PC-3 (cell line): ENCODE measurements at regions of chr6 and their contacts with region 1.

Region 1: DNA sequence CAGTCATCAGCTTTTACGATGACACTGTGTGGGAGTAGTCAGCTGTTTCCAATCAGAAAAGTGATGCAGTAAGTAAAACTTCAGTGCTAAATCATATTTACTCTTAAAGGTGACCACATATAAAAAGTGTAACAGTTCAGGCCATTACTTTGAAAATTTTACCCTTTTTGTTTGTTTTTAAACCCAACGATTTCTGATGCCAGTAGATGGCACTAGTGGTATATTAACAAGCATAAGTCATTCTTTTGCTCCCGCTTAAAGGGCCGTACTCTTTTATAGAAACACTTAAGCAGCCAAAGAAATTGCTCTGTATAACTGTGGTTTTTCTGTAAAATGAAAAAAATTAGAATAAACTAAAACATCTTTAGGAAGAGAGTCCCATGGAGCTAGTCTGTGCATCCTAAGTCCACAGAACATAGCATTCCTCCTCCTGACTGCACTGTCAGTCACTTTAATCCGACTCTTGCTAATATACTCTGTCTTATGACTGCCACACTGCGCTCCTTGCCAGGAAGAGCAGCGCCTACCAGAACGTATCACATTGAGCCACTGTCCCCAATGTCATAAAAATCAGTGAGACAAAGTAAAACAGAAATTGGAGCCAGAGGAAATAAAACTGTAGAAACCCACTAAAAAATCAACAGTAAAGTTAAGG is 25.0 kb downstream of the HEBP2 start:
- DNase-seq: peak; percentile 59
- ATAC-seq: peak; percentile 73
- H3K4me3 ChIP-seq: no peak overlapping the region
- H3K27ac ChIP-seq: no peak overlapping the region
- H3K4me1 ChIP-seq: no peaks in the 10 kb centered on the region
- H3K27me3 ChIP-seq: no peaks in the 10 kb centered on the region
- CTCF ChIP-seq: peak; percentile 77

Region 2: GRCh38 chr6:138012682-138013081 is 416.4 kb before region 1 on chr6:
- CTCF ChIA-PET with region 1: no interaction called
- POLR2A ChIA-PET with region 1: no interaction called
- intact Hi-C with region 1: no loop called
- DNase-seq: no peak
- ATAC-seq: no peak
- H3K4me3 ChIP-seq: no peak overlapping the region
- H3K27ac ChIP-seq: no peak overlapping the region
- H3K4me1 ChIP-seq: no peaks in the 10 kb centered on the region
- H3K27me3 ChIP-seq: no peaks in the 10 kb centered on the region
- CTCF ChIP-seq: no peak

Region 3: DNA sequence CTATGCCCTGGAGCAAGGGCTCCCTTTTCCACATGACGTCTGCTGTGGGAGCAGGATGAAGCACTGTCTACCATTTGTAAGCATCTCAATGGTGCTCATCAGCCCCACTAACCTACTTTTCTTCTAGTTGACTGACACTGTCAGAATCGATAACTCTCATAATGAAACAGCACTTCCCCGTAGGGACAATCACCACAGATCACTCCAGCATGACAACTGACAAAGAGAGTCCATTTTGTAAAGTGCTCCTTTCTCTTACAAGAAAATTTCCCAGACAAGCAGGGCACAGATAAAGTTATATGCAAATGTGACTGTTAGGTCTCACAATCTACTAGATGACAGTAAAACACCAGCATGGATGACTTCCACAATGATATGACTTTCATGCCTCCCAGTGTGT is 21.4 kb after region 1 on chr6:
- CTCF ChIA-PET with region 1: no interaction called
- POLR2A ChIA-PET with region 1: interaction called, 12 read pairs
- intact Hi-C with region 1: no loop called
- DNase-seq: no peak
- ATAC-seq: no peak
- H3K4me3 ChIP-seq: no peak overlapping the region
- H3K27ac ChIP-seq: no peak overlapping the region
- H3K4me1 ChIP-seq: peaks cover 10% of the 10 kb centered on the region
- H3K27me3 ChIP-seq: no peaks in the 10 kb centered on the region
- CTCF ChIP-seq: no peak

Region 4: GRCh38 chr6:138465007-138465645 is 36.1 kb after region 1 on chr6:
- CTCF ChIA-PET with region 1: no interaction called
- POLR2A ChIA-PET with region 1: no interaction called
- intact Hi-C with region 1: loop called (anchors 5 kb)
- DNase-seq: peak; percentile 88
- ATAC-seq: peak; percentile 70
- H3K4me3 ChIP-seq: peak overlapping the region; percentile 28; the same call in 1 of the 2 replicates
- H3K27ac ChIP-seq: peak overlapping the region; percentile 95
- H3K4me1 ChIP-seq: peaks cover 54% of the 10 kb centered on the region
- H3K27me3 ChIP-seq: no peaks in the 10 kb centered on the region
- CTCF ChIP-seq: no peak

Region 5: DNA sequence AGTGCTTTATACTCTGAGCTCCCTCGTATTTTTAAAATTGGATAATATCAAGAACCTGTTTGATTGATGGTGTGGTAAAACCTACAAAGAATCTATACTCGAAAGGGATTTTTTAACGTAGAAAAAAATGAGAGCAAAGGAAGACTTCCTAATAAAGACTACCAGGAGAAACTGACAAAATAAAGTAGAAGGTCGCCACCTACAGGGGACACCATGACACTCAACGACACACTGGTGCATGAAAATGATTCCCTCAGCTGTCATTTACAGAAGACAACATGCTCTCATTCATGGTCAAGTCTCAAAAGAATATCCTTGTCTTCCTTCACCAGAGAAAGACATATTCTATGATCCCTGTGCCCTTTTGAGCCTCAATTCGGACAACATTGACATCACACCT is 80.3 kb after region 1 on chr6:
- CTCF ChIA-PET with region 1: no interaction called
- POLR2A ChIA-PET with region 1: no interaction called
- intact Hi-C with region 1: loop called (anchors 1 kb)
- DNase-seq: peak; percentile 59
- ATAC-seq: peak; percentile 58; the same call in 1 of the 2 replicates
- H3K4me3 ChIP-seq: no peak overlapping the region
- H3K27ac ChIP-seq: no peak overlapping the region
- H3K4me1 ChIP-seq: 0 out of 2 replicates have a peak, but pooled peaks cover 6% of the 10 kb centered on the region
- H3K27me3 ChIP-seq: no peaks in the 10 kb centered on the region
- CTCF ChIP-seq: peak; percentile 76

Region 6: DNA sequence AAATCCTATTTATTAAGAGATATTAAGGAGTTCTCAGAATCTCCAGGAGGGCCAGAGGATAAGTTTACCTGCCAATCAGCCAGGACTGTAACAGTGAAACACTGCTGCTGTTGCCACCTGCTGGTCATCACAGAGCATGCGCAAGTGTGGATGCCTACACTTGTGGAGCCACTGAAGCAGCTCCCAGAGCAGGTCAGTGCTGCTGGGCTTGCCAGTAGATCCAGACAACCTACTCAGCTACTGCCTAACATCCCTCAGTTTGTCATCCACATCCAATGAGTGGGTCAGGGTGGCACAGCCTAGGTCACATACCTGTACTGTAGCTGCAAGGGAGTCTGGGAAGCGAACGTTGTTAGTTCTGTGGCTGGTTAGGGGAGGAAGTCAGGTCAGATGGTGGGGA is 88.6 kb after region 1 on chr6:
- CTCF ChIA-PET with region 1: interaction called, 4 read pairs
- POLR2A ChIA-PET with region 1: no interaction called
- intact Hi-C with region 1: loop called (anchors 1 kb)
- DNase-seq: peak; percentile 68
- ATAC-seq: peak; percentile 97
- H3K4me3 ChIP-seq: no peak overlapping the region
- H3K27ac ChIP-seq: no peak overlapping the region
- H3K4me1 ChIP-seq: no peaks in the 10 kb centered on the region
- H3K27me3 ChIP-seq: no peaks in the 10 kb centered on the region
- CTCF ChIP-seq: peak; percentile 75

Region 7: GRCh38 chr6:138588805-138589434 is 159.8 kb after region 1 on chr6:
- CTCF ChIA-PET with region 1: no interaction called
- POLR2A ChIA-PET with region 1: no interaction called
- intact Hi-C with region 1: loop called (anchors 5 kb)
- DNase-seq: peak; percentile 69
- ATAC-seq: peak; percentile 32
- H3K4me3 ChIP-seq: no peak overlapping the region
- H3K27ac ChIP-seq: no peak overlapping the region
- H3K4me1 ChIP-seq: peaks cover 13% of the 10 kb centered on the region
- H3K27me3 ChIP-seq: no peaks in the 10 kb centered on the region
- CTCF ChIP-seq: peak; percentile 87

Region 8: GRCh38 chr6:138765896-138766655 is 337.0 kb after region 1 on chr6:
- CTCF ChIA-PET with region 1: no interaction called
- POLR2A ChIA-PET with region 1: no interaction called
- intact Hi-C with region 1: loop called (anchors 5 kb)
- DNase-seq: peak; percentile 66
- ATAC-seq: no peak
- H3K4me3 ChIP-seq: no peak overlapping the region
- H3K27ac ChIP-seq: no peak overlapping the region
- H3K4me1 ChIP-seq: no peaks in the 10 kb centered on the region
- H3K27me3 ChIP-seq: no peaks in the 10 kb centered on the region
- CTCF ChIP-seq: peak; percentile 76